ENCODE measurements at regions of chr10 and their contacts with region 1.

Region 1: DNA sequence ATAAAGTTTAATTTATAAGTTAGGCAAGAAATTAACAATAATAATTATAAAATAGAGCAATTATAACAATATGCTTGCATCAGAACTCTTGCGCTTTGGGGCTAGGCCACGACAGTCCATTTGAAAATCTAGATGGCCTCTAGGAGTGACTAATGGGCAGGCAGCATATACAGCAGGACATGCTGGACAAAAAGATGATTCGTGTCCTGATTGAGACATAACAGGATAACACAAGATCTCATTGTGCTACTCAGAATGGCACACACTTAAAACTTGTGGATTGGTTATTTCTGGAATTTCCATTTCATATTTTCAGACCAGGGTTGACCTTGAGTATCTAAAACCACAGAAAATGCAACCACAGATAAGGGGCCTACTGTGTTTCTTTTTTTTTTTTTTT is 27.5 kb downstream of the CTNNA3 start:
- DNase-seq: no peak
- ATAC-seq: no peak

Region 2: GRCh38 chr10:67575532-67575931 is 92.9 kb before region 1 on chr10:
- intact Hi-C with region 1: no loop called
- DNase-seq: no peak
- ATAC-seq: peak; percentile 92

Region 3: DNA sequence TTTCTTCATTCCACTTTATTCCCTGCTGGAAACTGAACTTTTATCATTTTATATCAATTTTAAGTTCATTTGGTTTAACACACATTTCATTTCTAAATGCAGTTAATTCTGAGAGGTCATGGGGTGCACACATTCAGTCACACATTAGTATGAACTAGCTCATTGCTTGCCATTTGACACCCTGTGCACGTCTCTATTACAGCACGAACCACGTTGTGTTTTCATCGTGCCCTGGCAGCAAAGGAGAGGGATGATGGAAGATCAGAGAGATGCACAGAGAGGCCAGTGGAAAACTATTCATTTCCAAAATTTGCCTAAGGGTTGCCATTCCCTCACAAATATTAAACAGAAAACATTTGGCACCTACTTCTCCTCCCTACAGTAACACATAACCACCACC is 17.9 kb before region 1 on chr10:
- intact Hi-C with region 1: loop called (anchors 2 kb)
- DNase-seq: no peak
- ATAC-seq: no peak